K562 (cell line): ENCODE measurements at regions of chr2 and their contacts with region 1.

Region 1: DNA sequence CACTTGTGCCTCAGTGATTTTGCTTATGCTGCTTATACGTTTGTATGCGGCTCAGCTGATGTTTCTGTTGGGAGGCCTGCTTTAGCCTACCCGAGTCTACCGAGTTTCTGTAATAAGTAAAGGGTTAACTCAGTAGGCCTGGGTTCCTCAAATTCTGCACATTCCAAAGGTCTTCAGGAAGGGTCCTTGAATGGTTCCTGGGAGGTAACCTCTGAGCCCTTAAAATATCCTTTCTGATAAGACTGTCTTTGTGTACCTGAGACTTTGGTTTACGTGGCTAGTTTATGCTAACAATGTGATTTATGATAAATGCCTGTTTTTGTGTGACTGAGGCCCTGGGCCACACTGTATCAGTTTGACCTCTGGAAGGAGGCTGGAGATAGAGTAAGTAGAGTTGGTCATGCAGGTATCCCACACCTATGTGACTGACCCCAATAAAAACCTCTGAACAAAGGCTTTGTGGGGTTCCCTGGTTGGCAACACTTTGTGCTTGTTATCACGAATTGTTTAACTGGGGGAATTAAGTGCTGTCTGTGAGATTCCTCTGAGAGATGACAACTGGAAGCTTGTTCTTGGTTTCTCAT is 18.9 kb upstream of the PNPT1 start:
- DNase-seq: no peak
- ATAC-seq: no peak
- H3K4me3 ChIP-seq: no peak overlapping the region
- H3K27ac ChIP-seq: no peak overlapping the region
- H3K4me1 ChIP-seq: no peaks in the 10 kb centered on the region
- H3K27me3 ChIP-seq: peaks cover 0 to 2% of the 10 kb centered on the region in 2 experiments; a peak in 3 of 5 replicates
- CTCF ChIP-seq: no peak
- EP300 ChIP-seq: no peak
- POLR2A ChIP-seq: no peak
- RAD21 ChIP-seq: no peak

Region 2: DNA sequence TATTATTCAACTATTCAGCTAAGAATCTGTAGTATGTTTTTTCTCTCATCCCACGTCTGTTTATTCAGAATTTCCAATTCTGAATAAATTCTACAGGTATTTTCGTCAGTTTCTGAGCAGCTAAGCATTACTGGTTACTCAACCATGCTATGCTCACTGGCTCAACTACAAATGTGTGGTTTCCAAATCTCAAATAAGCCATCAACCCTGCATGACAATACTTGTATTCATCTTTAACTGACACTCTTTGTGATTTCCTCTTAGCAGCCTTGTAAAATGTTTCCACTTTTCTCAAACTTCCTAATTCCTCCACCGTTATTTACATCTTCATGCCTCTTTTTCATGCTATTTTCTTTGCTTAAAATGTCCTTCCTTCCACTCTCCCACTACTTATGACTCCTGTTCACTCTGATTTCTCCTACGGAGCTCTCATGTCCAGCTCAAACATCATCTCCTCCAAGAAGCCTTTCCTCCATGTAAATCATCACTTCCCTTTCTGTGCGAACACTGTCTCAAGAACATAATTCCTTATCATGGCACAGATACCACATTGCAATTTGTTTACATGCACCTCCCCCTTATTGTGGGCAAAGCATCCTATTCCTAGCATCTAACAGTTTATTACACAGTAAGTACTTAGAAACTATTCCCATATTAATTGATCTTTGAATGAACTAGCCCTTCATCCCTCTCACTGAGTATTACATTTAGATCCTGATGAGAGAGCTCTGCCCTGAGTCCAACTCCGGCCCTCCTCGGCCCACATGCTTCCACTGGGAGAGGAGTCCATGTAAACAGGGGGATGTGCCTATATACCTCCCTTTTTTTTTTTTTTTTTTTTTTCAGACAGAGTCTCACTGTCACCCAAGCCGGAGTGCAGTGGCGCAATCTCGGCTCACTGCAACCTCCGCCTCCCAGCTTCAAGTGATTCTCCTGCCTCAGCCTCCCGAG is 303.4 kb before region 1 on chr2:
- CTCF ChIA-PET with region 1: no interaction called
- POLR2A ChIA-PET with region 1: no interaction called
- in situ Hi-C with region 1: no loop called
- intact Hi-C with region 1: no loop called
- DNase-seq: no peak
- ATAC-seq: no peak
- H3K4me3 ChIP-seq: no peak overlapping the region
- H3K27ac ChIP-seq: no peak overlapping the region
- H3K4me1 ChIP-seq: peaks cover 0 to 2% of the 10 kb centered on the region in 2 experiments; a peak in 1 of 5 replicates
- H3K27me3 ChIP-seq: no peaks in the 10 kb centered on the region
- CTCF ChIP-seq: no peak
- EP300 ChIP-seq: no peak
- POLR2A ChIP-seq: no peak
- RAD21 ChIP-seq: no peak

Region 3: DNA sequence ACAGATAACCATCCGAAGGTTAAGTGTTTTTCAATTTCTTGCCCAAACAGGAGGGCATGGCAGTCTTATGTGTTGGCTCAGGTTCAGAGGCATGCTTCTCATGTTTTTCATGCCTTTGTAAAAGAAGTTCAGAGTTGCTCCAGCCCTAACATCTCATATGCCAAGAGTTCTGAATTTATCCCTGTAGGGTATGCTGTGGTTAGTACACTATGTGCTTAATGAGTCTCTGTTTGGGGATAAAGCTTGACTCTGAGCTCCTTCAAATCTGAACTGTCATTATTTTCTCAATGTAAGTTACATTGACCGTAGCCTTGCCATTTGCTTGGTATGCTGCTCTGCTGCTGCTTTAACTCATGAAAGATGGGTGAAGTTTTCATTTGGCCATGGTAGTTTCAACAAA is 49.0 kb after region 1 on chr2:
- CTCF ChIA-PET with region 1: no interaction called
- POLR2A ChIA-PET with region 1: no interaction called
- in situ Hi-C with region 1: loop called (anchors 5 kb)
- intact Hi-C with region 1: loop called (anchors 5 kb)
- DNase-seq: no peak
- ATAC-seq: no peak
- H3K4me3 ChIP-seq: no peak overlapping the region
- H3K27ac ChIP-seq: no peak overlapping the region
- H3K4me1 ChIP-seq: no peaks in the 10 kb centered on the region
- H3K27me3 ChIP-seq: peaks cover 0 to 2% of the 10 kb centered on the region in 2 experiments; a peak in 1 of 5 replicates
- CTCF ChIP-seq: no peak
- EP300 ChIP-seq: no peak
- POLR2A ChIP-seq: no peak
- RAD21 ChIP-seq: no peak